OCI-LY7 (cell line): ENCODE measurements at regions of chr3 and their contacts with region 1.

Region 1: GRCh38 chr3:64039981-64040733 is 16.9 kb upstream of the PSMD6 start:
- DNase-seq: no peak
- H3K4me3 ChIP-seq: no peak overlapping the region
- H3K27ac ChIP-seq: no peak overlapping the region
- H3K4me1 ChIP-seq: peaks cover 23% of the 10 kb centered on the region
- CTCF ChIP-seq: no peak

Region 2: GRCh38 chr3:64023187-64023848 is 16.8 kb before region 1 on chr3 and contains the start of gene PSMD6:
- CTCF ChIA-PET with region 1: no interaction called
- POLR2A ChIA-PET with region 1: interaction called, 22 read pairs
- intact Hi-C with region 1: no loop called
- DNase-seq: peak; percentile 90
- H3K4me3 ChIP-seq: peak within 1 kb of the TSS; percentile 93
- H3K27ac ChIP-seq: peak within 1 kb of the TSS; percentile 50
- H3K4me1 ChIP-seq: peaks cover 22% of the 10 kb centered on the region
- CTCF ChIP-seq: peak; percentile 97
- total RNA-seq, gene PSMD6: 65.2 and 74.1 TPM in 2 replicates